ENCODE measurements at regions of chr1 and their contacts with region 1.

Region 1: DNA sequence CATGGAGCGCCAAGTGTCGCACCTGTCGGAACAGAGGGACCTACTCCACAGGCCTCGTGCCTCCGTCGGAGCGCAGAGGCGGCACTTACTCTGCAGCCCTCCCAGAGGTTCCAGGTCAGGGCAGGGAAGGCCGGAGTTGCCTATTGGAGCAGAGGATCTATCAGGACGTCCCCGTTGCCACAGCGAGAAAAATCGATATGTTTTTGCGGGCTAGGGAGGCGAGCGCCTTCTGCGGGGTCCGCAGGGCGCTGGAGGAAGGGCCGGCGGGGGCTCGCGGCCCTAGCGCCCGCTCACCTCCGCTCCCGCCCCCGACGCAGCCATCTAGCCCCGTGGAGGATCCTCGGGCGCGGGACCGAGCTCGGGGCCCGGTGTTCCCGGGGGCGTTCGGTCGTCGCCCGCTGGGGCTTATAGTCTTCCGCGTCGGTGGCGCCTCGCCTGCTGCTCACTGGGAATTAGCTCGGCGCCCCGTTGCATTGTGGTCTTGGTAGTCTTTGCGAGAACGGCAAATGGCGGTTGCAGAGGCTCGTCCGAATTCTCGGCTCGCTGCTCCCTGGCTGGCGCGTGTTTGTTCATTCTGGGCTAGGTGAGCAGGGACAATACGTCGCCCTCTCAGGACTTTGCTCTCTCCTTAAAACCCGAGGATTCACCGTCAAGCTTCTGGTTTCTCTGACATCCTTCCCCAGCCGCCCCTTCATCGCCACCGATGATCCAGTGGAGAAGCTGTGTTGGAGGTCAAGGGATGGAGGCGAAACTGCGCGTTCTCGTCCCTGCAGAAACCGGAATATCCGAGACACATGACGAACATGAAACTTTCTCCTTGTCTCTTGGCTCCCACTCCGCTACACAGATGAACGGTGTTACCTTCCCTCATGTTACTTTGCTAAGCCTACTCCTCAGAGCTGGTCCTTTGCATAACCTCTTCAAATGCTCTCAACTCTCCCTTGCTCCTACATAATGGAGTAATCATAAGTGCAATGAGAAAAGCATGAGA is at the start of gene JTB:
- DNase-seq: peak; percentile 80
- H3K4me3 Mint-ChIP-seq: peak within 1 kb of the TSS; percentile 94
- H3K27ac Mint-ChIP-seq: peak within 1 kb of the TSS; percentile 95
- H3K4me1 Mint-ChIP-seq: peaks cover 33% of the 10 kb centered on the region
- H3K27me3 Mint-ChIP-seq: no peaks in the 10 kb centered on the region
- total RNA-seq, gene JTB: 198 and 213 TPM in 2 replicates

Region 2: GRCh38 chr1:153390938-153391710 is 586.4 kb before region 1 on chr1 and contains the start of gene S100A8:
- intact Hi-C with region 1: no loop called
- DNase-seq: no peak
- H3K4me3 Mint-ChIP-seq: no peak within 1 kb of the TSS
- H3K27ac Mint-ChIP-seq: no peak within 1 kb of the TSS
- H3K4me1 Mint-ChIP-seq: peaks cover 8% of the 10 kb centered on the region
- H3K27me3 Mint-ChIP-seq: peaks cover 16% of the 10 kb centered on the region
- total RNA-seq, gene S100A8: not detected in 2 replicates

Region 3: DNA sequence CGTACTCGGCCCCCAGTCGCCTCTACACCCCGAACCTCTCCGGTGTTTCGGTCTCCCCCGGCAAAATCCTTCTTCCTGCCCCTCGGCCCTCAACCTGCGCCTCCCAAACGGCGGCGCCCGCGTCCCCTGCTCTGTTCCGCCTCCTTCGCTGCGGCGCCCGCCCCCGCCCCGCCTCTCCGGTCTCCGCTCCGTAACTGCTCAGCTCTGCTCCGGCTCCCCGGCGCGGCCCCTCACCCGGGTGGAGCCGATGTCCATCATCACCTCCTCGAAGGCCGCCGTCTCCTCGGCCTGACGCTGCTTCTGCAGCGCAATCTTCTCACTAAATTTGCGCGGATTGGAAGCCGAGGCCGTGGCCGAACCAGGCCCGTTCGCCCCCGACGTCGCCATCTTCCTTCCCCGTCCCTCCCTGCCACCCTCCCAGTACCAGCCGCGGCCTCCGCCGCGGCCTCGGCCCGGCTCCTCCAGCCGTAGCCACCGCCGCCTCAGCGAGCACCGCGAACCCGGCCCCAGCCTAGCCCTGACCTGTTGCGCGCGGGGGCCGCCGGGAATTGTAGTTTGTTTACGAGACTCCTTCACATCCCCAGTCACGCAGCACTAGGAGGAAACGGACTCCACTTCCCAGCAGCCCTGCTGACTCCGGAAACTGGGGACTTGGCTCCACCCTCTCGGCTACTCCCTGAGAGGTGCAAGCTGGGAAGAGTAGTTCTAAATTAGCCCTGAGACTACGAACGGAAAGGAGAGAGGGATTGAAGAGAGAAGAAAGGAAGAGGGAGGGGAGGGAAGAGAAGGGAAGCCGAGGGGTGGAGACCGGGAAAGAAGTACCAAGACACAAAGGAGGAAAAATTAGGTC is 19.2 kb before region 1 on chr1 and contains the start of gene CRTC2:
- intact Hi-C with region 1: loop called (anchors 1 kb)
- DNase-seq: peak; percentile 96
- H3K4me3 Mint-ChIP-seq: peak within 1 kb of the TSS; percentile 97
- H3K27ac Mint-ChIP-seq: peak within 1 kb of the TSS; percentile 81
- H3K4me1 Mint-ChIP-seq: peaks cover 65% of the 10 kb centered on the region
- H3K27me3 Mint-ChIP-seq: no peaks in the 10 kb centered on the region
- total RNA-seq, gene CRTC2: 62.8 and 76.4 TPM in 2 replicates